ENCODE measurements at regions of chr11 and their contacts with region 1.

Region 1: DNA sequence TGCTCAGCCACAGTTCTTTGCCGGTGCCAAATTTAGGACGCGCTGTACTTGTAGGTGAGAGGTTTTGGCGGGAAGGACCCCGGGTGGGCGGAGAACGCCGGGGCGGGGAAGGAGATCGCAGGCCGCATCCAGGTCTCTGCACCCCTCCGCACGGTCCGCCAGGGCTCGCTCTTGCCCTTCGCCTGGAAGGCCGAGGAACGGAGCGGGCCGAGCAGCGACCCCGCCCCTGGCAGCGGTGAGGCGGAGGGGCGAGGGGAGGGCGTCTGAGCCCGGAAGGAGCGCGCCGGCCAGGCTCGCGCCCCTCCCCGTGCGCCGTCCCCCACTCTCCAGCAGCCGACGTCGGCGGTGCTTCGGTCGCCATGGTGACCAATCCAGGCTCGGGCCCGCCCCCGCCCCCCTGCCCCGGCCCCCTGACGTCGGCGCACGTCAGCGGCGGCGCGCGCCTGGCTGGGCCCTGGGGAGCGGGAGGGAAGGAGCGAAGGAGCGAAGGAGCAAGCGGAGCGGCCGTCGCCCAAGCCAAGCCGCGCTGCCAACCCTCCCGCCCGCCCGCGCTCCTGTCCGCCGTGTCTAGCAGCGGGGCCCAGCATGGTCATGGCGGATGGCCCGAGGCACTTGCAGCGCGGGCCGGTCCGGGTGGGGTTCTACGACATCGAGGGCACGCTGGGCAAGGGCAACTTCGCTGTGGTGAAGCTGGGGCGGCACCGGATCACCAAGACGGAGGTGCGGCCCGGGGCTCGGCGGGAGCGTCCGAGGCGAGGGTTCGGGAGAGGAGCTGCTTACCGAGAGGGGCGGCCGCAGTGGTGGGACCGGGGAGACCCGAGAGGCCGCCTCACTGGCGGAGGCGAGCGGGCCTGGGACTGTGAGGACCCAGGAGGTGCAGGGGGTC is at the start of gene SIK2:
- DNase-seq: peak; percentile 98
- H3K4me3 ChIP-seq: peak within 1 kb of the TSS; percentile 86 to 92 (median 91)
- H3K27ac ChIP-seq: peak within 1 kb of the TSS; percentile 95 to 98 (median 98)
- H3K4me1 ChIP-seq: peaks cover 0 to 51% (median 39%) of the 10 kb centered on the region in 4 donors
- H3K27me3 ChIP-seq: no peaks in the 10 kb centered on the region
- CTCF ChIP-seq: peak; percentile 82 to 93 (median 90)
- EP300 ChIP-seq: peak in 1 of 4 donors; percentile 24
- POLR2A ChIP-seq: peak; percentile 6 to 31
- total RNA-seq, gene SIK2: 10.7 to 14.1 (median 11.8) TPM

Region 2: GRCh38 chr11:111766093-111766833 is 164.0 kb after region 1 on chr11 and contains the start of gene PPP2R1B:
- intact Hi-C with region 1: loop called (anchors 1 kb)
- DNase-seq: peak; percentile 85
- H3K4me3 ChIP-seq: peak within 1 kb of the TSS; percentile 68 to 93 (median 89)
- H3K27ac ChIP-seq: peak within 1 kb of the TSS; percentile 77 to 94 (median 90)
- H3K4me1 ChIP-seq: peaks cover 0 to 27% (median 15%) of the 10 kb centered on the region in 4 donors
- H3K27me3 ChIP-seq: no peaks in the 10 kb centered on the region
- CTCF ChIP-seq: no peak
- EP300 ChIP-seq: no peak
- POLR2A ChIP-seq: peak in 1 of 2 donors; percentile 47
- total RNA-seq, gene PPP2R1B: 13.5 to 16.0 (median 14.8) TPM

Region 3: DNA sequence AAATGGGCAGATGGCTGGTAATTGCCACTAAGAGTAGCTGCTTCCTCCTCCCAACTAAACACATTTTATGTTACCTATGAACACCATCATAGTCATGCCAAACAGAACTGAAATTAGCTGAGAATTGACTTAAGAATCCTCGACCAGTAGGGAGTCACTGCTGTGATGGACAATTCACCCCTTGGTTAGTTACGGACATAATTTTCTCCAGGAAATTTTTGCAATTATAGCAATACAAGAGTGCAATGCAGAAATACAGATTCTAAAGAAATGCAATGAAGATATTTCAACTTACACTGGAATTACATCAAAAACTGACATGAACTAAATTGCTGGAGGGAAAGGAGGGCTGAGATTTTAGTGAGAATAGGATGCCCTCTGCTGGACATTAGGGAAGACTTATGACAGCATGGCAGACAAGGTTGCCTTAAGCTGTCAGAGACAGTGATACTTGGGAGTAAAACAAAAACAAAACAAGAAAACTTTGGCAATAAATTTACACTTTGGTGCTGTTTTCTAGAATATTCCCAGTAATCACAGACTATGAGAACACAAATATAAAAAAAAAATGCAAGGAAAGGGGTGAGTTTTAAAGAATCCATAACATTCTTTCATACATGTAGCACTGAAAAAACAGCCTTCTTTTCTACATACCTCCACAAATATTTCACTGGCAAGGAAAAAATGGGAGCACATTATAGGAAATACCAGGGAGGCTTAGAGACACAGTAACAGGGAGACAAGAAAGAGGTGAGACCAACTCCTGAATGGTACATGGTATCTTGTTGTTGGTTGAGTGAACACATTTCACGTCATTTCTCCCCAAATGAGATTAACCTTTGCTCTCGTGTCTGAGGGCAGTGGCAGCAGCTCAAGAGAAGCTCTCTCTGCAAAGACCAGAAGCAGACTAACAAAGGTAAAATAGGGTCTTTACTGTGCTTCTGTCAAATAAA is 175.1 kb after region 1 on chr11:
- intact Hi-C with region 1: loop called (anchors 1 kb)
- DNase-seq: no peak
- H3K4me3 ChIP-seq: no peak overlapping the region
- H3K27ac ChIP-seq: peak overlapping the region in 1 of 4 donors; percentile 6
- H3K4me1 ChIP-seq: no peaks in the 10 kb centered on the region
- H3K27me3 ChIP-seq: no peaks in the 10 kb centered on the region
- CTCF ChIP-seq: peak; percentile 69 to 83 (median 76)
- EP300 ChIP-seq: no peak
- POLR2A ChIP-seq: no peak

Region 4: GRCh38 chr11:111841370-111842053 is 239.3 kb after region 1 on chr11:
- intact Hi-C with region 1: loop called (anchors 5 kb)
- DNase-seq: peak; percentile 94
- H3K4me3 ChIP-seq: no peak overlapping the region
- H3K27ac ChIP-seq: peak overlapping the region in 1 of 4 donors; percentile 29
- H3K4me1 ChIP-seq: peaks cover 0 to 9% (median 3%) of the 10 kb centered on the region in 4 donors
- H3K27me3 ChIP-seq: no peaks in the 10 kb centered on the region
- CTCF ChIP-seq: peak; percentile 83 to 87 (median 86)
- EP300 ChIP-seq: no peak
- POLR2A ChIP-seq: no peak

Region 5: DNA sequence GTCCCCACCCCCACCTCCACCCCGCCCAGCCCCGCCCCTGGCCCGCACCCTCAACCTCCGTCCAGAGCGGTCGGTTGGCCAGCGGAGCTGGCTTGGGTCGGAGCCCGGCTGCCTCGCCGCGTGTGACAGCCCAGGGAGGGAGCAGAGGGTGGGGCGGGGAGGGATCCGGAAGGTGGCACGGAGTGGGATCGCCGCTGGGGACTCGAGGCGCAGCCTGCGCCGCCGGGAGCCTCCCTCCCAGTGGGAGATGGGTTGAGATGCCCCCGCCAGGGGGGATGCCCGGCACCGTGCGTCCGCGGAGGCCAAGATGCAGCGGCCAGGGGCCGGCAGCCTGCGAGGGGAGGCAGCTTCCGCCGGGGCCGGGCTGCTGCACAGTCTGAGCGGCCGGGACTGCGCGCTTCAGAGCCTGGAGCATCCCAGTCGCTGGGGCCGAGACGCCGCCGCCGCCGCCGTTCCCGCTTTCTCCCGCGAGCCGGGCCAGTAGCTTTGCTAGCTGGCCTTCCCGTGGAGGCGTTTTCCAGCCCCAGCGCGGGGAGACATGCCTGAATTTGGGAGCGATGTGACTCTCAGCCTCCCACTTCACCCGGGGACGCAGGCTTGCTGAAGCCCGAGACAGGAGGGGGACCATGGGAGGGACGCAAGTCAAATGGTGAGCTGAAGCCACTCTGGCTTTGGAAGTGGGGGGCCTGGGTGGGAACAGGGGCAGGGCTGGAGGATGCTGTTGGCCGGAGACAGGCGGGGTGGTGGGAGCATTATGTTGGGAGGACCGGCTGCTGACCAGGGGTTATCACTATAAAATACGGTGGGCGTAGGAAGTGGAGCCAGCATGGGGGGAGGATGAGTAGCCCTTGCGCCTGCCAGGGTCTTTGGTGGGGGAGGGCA is 375.2 kb after region 1 on chr11:
- intact Hi-C with region 1: loop called (anchors 10 kb)
- DNase-seq: peak; percentile 89
- H3K4me3 ChIP-seq: peak overlapping the region; percentile 82 to 97 (median 89)
- H3K27ac ChIP-seq: peak overlapping the region; percentile 95 to 99 (median 97)
- H3K4me1 ChIP-seq: peaks cover 0 to 59% (median 46%) of the 10 kb centered on the region in 4 donors
- H3K27me3 ChIP-seq: no peaks in the 10 kb centered on the region
- CTCF ChIP-seq: no peak
- EP300 ChIP-seq: no peak
- POLR2A ChIP-seq: peak; percentile 5 to 35

Measured in sigmoid colon (tissue), 7 donors.